ENCODE measurements at regions of chr4 and their contacts with region 1.

Region 1: DNA sequence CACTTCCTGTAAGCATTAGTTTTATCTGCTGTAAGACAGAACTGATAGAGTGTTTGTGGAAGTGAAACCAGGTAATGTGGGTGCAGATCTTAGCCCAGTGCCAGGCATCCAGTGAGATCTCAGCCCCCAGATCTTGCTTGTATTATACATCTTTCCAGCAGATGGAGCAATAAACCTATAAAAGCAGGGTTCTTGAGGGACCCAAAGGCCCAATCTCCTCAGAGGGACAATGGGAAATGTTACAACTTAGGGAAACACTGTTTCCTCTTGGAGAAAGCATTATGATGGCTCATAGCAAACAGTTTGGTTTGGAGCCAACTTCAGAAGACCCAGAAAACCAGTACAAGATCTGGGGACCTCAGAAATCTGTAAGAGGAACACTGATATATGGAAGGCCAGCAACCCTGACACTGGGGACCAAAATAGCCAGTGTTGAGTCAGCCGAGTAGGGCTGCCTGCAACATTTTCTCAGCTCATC is 206.3 kb downstream of the SLC7A11 start:
- DNase-seq: no peak
- H3K4me3 ChIP-seq: no peak overlapping the region
- H3K27ac ChIP-seq: no peak overlapping the region
- H3K27me3 ChIP-seq: no peaks in the 10 kb centered on the region
- CTCF ChIP-seq: peak; percentile 68

Region 2: GRCh38 chr4:137819964-137820383 is 215.8 kb before region 1 on chr4:
- CTCF ChIA-PET with region 1: interaction called, 11 read pairs
- POLR2A ChIA-PET with region 1: no interaction called
- DNase-seq: peak; percentile 18
- H3K4me3 ChIP-seq: no peak overlapping the region
- H3K27ac ChIP-seq: no peak overlapping the region
- H3K27me3 ChIP-seq: no peaks in the 10 kb centered on the region
- CTCF ChIP-seq: peak; percentile 71

Region 3: DNA sequence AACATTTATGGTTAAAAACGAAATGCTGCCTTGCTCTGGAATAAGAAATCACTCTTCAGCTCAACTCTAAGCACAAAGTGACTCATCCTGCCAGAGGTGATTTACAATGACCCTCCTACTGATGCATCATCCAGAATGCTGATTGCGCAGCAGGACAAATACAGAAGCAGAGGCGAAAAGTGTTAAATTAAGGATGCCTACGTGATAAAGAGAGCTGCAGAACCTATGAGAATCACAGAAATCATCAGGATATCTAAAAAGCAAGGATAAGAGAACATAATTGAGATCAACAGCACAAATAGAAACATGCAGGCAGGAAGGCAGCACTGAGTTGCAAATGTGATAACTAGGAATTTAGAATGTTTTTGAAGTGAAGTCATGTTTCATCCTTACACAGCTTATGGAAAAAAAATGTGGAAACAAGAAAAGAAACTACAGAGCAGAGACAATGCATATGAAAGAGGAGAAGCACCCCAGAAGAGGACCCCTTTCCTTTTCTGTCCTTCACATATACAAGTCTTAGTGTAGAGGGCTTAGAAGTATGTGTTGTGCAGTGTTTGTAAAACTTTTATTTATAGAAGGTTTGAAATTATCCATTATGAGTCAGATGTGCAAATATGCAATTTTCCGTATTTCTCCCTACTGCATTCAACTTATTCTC is 18.0 kb after region 1 on chr4:
- CTCF ChIA-PET with region 1: interaction called, 7 read pairs
- POLR2A ChIA-PET with region 1: interaction called, 12 read pairs
- DNase-seq: peak; percentile 68
- H3K4me3 ChIP-seq: peak overlapping the region; percentile 38
- H3K27ac ChIP-seq: peak overlapping the region; percentile 68
- H3K27me3 ChIP-seq: no peaks in the 10 kb centered on the region
- CTCF ChIP-seq: no peak

Region 4: GRCh38 chr4:138174981-138175794 is 139.4 kb after region 1 on chr4:
- CTCF ChIA-PET with region 1: interaction called, 31 read pairs
- POLR2A ChIA-PET with region 1: no interaction called
- DNase-seq: peak; percentile 24
- H3K4me3 ChIP-seq: no peak overlapping the region
- H3K27ac ChIP-seq: no peak overlapping the region
- H3K27me3 ChIP-seq: no peaks in the 10 kb centered on the region
- CTCF ChIP-seq: 0 out of 2 replicates have a peak, but pooled peaks have one; percentile 7

Region 5: GRCh38 chr4:138182838-138183426 is 147.1 kb after region 1 on chr4:
- CTCF ChIA-PET with region 1: interaction called, 22 read pairs
- POLR2A ChIA-PET with region 1: interaction called, 4 read pairs
- DNase-seq: peak; percentile 26
- H3K4me3 ChIP-seq: no peak overlapping the region
- H3K27ac ChIP-seq: no peak overlapping the region
- H3K27me3 ChIP-seq: no peaks in the 10 kb centered on the region
- CTCF ChIP-seq: peak; percentile 68